Astrocyte of the cerebellum (primary cell): ENCODE measurements at regions of chr6 and their contacts with region 1.

Region 1: DNA sequence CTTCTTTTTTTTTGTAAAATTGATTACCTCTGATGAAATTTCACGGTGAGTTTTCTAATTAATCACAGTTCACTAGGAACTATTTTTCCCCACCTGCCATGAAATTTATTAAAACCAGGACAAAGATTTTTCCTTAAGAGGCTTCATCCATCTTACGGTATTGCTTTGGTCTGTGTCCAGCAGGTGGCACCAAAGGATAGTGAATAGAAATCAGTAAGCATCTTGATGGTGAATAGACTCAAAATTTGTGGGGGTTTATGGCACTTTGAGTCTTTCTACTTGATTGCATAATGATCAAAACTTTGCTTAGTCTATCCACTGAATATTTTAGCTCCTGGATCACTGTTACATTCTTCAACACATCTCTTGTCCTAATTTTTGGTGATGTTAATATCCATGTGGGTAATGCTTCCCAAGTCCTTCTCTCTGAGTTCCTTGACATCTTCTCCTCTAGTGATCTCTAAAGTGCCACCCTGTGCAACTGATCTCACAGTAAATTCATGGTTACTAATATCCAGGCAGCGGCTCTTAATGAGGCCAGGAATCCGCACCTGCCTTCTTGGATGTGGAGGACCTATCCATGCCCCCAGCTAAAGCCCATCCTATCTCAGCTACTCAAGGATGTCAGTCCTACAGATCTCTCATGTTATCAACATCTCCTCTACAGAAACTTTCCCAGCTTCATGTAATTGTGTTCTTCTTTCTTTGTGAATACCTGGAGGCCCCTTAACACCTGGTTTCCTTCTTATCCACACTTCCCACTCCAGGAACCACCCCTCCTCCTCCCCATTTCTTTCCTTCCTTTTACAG is 54.5 kb downstream of the STMND1 start:
- DNase-seq: peak; percentile 87
- H3K4me3 ChIP-seq: no peak overlapping the region
- CTCF ChIP-seq: peak; percentile 67

Region 2: DNA sequence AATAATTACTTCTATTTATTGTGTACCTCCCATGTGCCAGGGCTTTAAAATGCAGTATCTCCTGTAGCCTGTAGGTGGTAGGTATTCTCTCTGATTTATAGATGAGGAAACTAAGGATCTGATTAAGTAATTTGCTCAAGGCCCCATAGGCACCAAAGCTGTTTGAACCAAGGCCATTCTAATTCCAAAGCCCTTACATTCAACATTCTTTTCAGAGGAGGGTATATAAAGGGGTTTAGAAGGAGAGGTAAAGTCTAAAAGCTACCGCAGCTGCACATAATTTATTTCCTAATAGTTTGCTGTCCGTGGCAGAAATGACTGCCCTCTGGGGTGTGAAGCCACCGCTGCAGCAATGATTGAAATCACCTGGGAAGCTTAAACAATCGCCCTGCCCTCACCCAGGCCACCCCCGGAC is 348.8 kb after region 1 on chr6:
- in situ Hi-C with region 1: loop called (anchors 10 kb)
- DNase-seq: no peak
- H3K4me3 ChIP-seq: no peak overlapping the region
- CTCF ChIP-seq: peak; percentile 40

Region 3: DNA sequence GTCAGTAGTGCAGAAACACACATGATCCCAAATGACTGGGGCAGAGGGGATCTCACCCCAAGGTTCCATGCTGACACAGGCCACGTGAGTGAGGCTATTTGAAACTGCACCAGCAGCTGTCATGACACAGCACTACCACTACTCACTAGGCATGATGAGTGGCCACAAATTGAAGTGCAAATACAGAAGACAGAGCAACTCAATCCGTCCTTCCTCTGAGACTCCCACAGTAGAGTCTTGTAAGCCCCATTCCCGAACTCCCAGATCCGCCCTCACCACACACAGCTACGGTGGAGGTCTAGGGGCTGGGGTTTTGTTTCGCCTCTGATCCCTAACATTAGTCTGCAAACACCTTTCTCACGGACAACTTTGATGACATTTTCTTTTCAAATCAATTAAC is 663.7 kb after region 1 on chr6:
- in situ Hi-C with region 1: loop called (anchors 25 kb)
- DNase-seq: no peak
- H3K4me3 ChIP-seq: no peak overlapping the region
- CTCF ChIP-seq: no peak